Posterior vena cava (tissue), 2 donors: ENCODE measurements at regions of chr6 and their contacts with region 1.

Region 1: DNA sequence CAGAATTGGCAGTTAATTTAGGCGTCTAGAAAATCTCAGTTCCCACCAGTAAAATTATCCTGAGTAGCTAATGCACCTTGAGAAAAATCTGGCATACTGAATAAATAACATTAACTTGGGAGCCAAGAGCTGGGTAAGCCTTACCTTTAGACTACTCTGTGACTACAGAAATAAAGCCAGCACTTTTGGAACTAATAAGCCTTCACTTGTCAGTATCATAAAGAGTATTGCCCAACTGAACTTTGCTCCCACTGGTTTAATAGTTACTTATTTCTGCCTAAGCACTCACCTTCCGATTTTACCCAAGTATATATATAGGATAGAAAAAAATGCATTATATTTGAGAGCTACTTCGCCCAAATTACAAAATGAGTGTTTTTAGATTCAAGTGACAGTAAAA is 10.7 kb downstream of the FAM8A1 start:
- DNase-seq: no peak

Region 2: GRCh38 chr6:17628873-17629272 is 18.0 kb after region 1 on chr6:
- intact Hi-C with region 1: loop called in 1 of 2 experiments (anchors 2 kb)
- DNase-seq: no peak

Region 3: DNA sequence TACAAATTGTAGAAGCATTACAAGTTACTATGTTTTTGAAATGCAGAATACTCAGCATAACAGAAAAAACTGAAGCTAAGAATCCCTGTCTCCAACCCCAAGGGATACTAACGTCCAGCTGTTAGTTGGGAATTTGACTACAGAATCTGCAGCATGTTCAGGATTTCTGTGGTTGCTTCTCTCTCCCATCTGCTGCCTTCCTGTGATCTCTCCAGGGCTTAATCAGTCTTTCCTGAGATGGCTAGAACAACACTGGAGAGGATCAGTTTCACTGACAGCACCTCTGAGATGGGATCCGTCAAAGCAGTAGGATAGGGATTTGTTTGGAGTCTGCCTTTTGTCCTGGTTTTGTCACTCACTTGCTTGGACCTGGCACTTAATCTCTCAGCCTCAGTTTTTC is 169.2 kb after region 1 on chr6:
- intact Hi-C with region 1: loop called in 1 of 2 experiments (anchors 10 kb)
- DNase-seq: no peak

Region 4: GRCh38 chr6:17932330-17932852 is 321.6 kb after region 1 on chr6:
- intact Hi-C with region 1: no loop called
- DNase-seq: no peak